Cardiac septum (tissue), 1 donor: ENCODE measurements at regions of chr3 and their contacts with region 1.

Region 1: DNA sequence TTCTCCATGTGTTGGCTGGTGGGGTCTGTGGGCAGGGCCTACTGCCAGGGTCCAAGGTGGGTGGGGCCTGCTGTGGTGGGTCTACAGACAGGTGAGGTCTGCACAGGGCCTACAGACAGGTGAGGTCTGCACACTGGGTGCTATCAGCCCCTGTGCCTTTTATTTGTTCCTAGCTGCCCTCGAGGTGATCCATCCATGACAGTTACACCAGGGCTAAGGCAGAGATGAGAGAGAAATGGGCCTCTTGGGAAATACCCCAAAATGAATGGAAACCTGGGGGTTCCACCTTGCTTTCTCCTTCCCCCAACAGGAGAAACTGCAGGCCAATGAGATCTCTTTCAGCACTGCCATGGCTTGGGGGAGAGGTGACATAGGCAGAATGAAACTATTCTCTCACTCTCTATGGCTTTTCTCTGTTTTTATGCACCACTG is 36.4 kb downstream of the CFAP100 start:
- DNase-seq: no peak

Region 2: DNA sequence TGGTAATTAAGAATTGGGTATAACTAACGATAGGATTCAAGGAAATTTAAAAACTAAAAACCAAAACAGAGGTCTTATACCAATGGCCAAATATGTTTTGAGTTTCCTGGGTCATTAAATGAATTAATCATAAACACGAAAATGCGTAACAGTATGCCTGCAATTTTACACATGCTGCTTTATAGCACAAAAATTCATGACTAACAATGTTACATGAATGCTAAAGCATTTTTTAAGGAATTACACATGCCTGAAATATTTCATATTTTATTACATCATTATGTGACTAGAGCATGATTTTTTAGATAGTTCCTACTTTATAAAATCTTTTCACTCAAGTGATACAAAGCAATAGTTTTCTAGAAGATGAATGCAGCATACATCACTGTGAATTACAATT is 1130.7 kb before region 1 on chr3:
- intact Hi-C with region 1: no loop called
- DNase-seq: no peak

Region 3: GRCh38 chr3:126468028-126468891 is 37.1 kb after region 1 on chr3:
- intact Hi-C with region 1: loop called (anchors 5 kb)
- DNase-seq: no peak